PC-3 (cell line): ENCODE measurements at regions of chr10 and their contacts with region 1.

Region 1: GRCh38 chr10:120735773-120736371 is 115.3 kb upstream of the WDR11 start:
- DNase-seq: peak; percentile 50
- ATAC-seq: no peak
- H3K4me3 ChIP-seq: peak overlapping the region; percentile 64; the same call in 1 of the 2 replicates
- H3K27ac ChIP-seq: peak overlapping the region; percentile 80; the same call in 1 of the 2 replicates
- H3K4me1 ChIP-seq: peaks cover 32% of the 10 kb centered on the region
- H3K27me3 ChIP-seq: no peaks in the 10 kb centered on the region
- CTCF ChIP-seq: peak; percentile 79

Region 2: DNA sequence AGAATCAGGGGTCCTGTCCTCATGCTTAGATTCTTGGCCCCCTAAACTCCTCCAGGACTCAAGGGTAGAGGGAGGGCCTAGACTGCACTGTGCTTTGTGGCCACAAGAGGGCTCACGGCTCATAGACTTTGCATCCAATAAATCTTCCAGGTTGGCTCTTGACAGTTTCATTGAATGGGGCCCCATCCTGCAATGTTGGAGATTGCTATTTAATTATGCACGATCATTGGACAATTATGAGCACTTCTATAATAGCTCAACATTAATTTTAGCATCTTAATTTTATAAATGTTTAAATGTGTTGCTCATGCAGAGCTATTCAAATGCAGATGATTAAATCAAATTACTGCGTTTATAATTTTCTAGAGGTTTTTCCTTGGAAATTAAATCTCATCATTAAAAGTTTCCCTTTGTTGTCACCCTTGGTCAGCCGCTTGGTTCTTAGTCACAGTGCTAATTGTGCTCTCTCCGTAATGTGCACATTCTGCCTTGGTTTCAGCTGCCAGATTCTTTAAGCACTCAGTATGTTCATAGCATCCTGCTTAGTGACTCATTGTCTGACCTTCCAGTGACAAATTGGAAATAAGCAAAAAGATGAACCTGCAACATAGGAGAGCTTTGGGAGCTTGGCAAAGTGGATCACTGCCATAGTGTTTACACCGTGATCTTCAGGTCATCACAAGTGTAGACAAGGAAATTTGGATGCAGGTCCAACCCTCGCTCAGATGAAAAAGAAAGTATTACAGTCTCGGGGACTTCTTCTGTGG is 312.3 kb before region 1 on chr10:
- CTCF ChIA-PET with region 1: no interaction called
- POLR2A ChIA-PET with region 1: no interaction called
- intact Hi-C with region 1: loop called (anchors 1 kb)
- DNase-seq: peak; percentile 71
- ATAC-seq: peak; percentile 73
- H3K4me3 ChIP-seq: no peak overlapping the region
- H3K27ac ChIP-seq: peak overlapping the region; percentile 54
- H3K4me1 ChIP-seq: peaks cover 32% of the 10 kb centered on the region
- H3K27me3 ChIP-seq: no peaks in the 10 kb centered on the region
- CTCF ChIP-seq: peak; percentile 89

Region 3: DNA sequence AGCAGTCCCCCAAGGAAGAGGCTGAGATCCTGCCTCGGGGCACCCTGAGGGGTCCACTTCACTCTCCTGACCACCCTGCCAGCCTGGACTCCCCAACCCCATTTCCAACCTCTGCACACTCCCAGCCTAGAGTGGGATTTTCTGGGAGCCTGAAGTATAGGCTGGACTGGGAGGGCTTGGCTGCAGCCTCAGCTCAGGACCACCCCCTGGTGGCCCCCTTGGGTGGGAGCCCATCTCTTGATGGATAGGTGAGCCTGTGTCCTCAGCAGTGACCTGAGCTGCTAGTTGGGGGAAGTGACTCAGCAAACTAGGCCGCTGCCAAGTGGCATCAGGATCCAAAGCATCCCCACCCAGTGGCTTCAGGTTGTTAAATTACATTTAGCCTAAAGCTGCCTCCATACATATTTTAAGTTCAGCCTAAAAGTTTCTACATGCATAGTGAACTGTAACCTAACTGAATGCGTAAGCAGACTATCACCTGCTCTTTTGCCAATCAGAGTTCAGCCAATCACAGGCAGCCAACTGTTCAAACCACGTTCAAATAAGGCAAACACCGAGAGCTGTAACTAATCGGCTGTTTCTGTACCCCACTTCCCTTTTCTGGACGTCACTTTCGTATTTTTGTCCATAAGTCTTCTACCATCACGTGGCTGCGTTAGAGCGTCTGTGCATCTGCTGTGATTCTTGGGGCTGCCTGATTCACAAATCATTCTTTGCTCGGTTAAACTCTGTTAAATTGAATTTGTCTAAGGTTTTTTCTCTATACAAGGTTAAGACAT is 134.8 kb before region 1 on chr10:
- CTCF ChIA-PET with region 1: no interaction called
- POLR2A ChIA-PET with region 1: no interaction called
- intact Hi-C with region 1: loop called (anchors 2 kb)
- DNase-seq: peak; percentile 84
- ATAC-seq: peak; percentile 83
- H3K4me3 ChIP-seq: no peak overlapping the region
- H3K27ac ChIP-seq: peak overlapping the region; percentile 87
- H3K4me1 ChIP-seq: peaks cover 17% of the 10 kb centered on the region
- H3K27me3 ChIP-seq: no peaks in the 10 kb centered on the region
- CTCF ChIP-seq: peak; percentile 73

Region 4: DNA sequence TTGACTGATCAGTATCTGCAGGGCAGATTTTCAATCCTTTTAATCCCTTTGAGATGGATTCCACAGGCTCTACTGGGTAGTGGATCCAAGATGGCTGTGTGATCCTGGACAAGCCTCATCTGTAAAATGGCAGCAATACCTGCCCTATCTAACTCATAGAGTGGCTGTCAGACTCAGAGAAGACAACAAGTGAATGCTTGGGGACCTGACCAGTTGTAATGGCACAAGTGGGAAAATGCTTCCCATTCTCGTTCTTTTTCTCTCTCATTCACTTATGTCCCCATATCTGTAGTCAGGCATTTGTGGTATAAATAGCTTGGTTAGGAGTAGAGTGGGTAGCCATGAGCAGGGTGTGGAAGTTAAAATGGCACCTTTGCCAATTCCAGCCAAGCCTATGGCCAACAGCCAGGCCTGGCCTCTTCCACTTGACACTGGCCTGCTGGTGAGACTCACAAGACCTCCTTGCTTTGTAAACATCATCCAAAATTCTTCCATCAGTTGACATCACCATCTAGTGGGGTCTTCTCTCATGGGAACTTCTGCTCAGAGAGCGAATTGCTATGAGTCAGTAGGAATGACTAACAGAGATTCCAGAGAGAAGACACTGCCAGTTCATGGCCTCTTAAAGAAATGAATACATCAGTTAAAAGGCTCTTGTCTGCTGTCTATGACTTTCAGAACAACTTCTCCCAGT is 128.7 kb before region 1 on chr10:
- CTCF ChIA-PET with region 1: no interaction called
- POLR2A ChIA-PET with region 1: no interaction called
- intact Hi-C with region 1: loop called (anchors 2 kb)
- DNase-seq: peak; percentile 80
- ATAC-seq: peak; percentile 88
- H3K4me3 ChIP-seq: no peak overlapping the region
- H3K27ac ChIP-seq: peak overlapping the region; percentile 91
- H3K4me1 ChIP-seq: peaks cover 28% of the 10 kb centered on the region
- H3K27me3 ChIP-seq: no peaks in the 10 kb centered on the region
- CTCF ChIP-seq: no peak

Region 5: DNA sequence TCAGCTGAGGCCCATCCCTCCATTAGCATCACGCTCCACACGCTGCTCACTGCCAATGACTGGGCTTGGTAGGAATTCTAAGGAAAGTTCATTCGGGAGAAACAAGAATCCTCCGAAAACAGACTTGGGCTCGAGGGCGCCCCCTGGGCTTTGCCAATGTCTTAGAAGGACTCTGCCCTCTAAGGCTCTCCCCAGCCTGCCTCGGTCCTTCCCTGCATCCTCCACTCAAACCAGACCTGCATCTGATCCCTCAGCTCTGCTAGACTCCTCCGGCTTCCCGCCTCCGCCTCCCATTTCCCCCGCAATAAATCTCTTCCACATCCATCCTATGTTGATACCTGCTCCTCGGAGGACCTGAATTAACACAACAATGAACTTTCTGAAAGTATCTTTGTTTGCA is 101.2 kb before region 1 on chr10:
- CTCF ChIA-PET with region 1: no interaction called
- POLR2A ChIA-PET with region 1: no interaction called
- intact Hi-C with region 1: loop called (anchors 5 kb)
- DNase-seq: no peak
- ATAC-seq: no peak
- H3K4me3 ChIP-seq: no peak overlapping the region
- H3K27ac ChIP-seq: no peak overlapping the region
- H3K4me1 ChIP-seq: peaks cover 14% of the 10 kb centered on the region
- H3K27me3 ChIP-seq: no peaks in the 10 kb centered on the region
- CTCF ChIP-seq: peak; percentile 41; the same call in 1 of the 2 replicates

Region 6: DNA sequence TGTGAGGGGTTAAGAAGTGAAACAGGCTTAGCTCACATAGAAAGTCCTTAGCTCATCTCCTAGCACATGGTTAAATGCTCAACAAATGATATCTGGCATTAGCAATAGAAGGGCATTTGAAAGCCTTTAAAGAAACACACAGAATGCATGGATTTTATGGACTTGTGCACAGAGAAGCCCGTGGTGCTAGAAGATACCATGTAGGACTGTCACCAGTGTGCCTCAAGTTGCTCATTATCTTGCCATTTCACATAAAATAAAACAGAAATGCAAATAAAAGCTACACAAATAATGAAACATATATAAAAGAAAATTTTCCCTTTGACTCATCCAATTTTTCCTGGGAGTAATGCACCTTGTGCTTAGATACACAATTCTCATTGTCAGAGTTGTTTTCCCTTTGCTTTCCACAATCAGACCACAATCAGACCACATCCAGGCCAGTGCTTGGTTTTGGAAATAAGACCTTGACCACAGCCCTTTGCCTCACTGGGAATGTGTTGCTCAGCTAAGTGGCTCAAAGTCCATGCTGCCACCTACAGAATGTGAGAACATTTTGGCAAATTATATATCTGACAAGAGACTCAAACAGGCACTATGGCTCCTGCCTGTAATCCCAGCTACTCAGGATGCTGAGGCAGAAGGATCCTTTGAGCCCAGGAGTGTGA is 105.8 kb after region 1 on chr10:
- CTCF ChIA-PET with region 1: interaction called, 3 read pairs
- POLR2A ChIA-PET with region 1: no interaction called
- intact Hi-C with region 1: loop called (anchors 1 kb)
- DNase-seq: peak; percentile 92
- ATAC-seq: peak; percentile 82
- H3K4me3 ChIP-seq: peak overlapping the region; percentile 19; the same call in 1 of the 2 replicates
- H3K27ac ChIP-seq: peak overlapping the region; percentile 96
- H3K4me1 ChIP-seq: peaks cover 40% of the 10 kb centered on the region
- H3K27me3 ChIP-seq: no peaks in the 10 kb centered on the region
- CTCF ChIP-seq: peak; percentile 46; the same call in 1 of the 2 replicates